CD8-positive, alpha-beta T cell (primary cell): ENCODE measurements at regions of chr16 and their contacts with region 1.

Region 1: DNA sequence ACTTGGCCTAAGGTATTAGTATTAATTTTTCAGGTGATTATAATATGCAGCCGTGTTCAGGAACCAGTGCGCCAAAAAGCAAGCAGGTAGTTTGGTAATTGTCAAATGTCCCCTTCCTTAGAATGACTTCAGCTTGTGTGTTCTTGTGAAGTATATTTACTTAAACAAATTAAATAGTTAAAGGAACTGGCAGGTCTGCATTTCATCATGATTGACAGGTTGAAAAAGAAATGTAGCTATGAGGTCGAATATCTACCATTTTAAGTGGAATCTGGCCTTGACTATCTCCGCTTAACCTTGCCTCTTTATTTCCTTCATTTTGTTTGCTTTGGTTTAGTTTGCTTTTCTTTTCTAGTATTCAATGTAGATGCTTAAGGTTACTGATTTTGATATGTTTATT is 1467.6 kb upstream of the CDH8 start:
- DNase-seq: no peak
- ATAC-seq: no peak
- H3K4me3 ChIP-seq: no peak overlapping the region
- H3K4me3 Mint-ChIP-seq: no peak overlapping the region
- H3K27ac ChIP-seq: no peak overlapping the region
- H3K27ac Mint-ChIP-seq: no peak overlapping the region
- H3K4me1 ChIP-seq: no peaks in the 10 kb centered on the region
- H3K4me1 Mint-ChIP-seq: no peaks in the 10 kb centered on the region
- H3K27me3 ChIP-seq: no peaks in the 10 kb centered on the region
- H3K27me3 Mint-ChIP-seq: no peaks in the 10 kb centered on the region
- CTCF ChIP-seq: no peak

Region 2: DNA sequence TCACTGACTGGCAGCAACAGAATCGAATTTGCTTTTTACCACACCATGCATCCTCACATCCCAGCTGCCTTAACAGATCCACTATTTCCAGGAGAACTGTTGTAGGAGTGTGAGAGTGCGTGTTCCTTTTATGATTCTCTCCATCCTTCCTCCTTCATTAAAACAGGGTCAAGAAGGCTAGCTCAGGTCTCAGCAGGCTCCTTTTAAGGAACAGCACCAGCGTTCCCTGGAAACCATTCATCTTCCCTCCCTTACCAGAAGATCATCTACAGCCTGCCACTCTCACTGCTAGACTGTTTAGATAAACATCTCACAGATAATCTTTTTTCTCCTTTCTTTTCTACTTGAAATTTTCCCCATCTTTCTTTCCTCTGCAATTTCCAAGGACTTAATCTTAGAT is 64.3 kb after region 1 on chr16:
- CTCF ChIA-PET with region 1: no interaction called
- POLR2A ChIA-PET with region 1: no interaction called
- intact Hi-C with region 1: loop called in 1 of 2 experiments (anchors 10 kb)
- DNase-seq: no peak
- ATAC-seq: no peak
- H3K4me3 ChIP-seq: no peak overlapping the region
- H3K4me3 Mint-ChIP-seq: no peak overlapping the region
- H3K27ac ChIP-seq: no peak overlapping the region
- H3K27ac Mint-ChIP-seq: no peak overlapping the region
- H3K4me1 ChIP-seq: no peaks in the 10 kb centered on the region
- H3K4me1 Mint-ChIP-seq: no peaks in the 10 kb centered on the region
- H3K27me3 ChIP-seq: no peaks in the 10 kb centered on the region
- H3K27me3 Mint-ChIP-seq: no peaks in the 10 kb centered on the region
- CTCF ChIP-seq: no peak